ENCODE measurements at regions of chr2 and their contacts with region 1.

Region 1: DNA sequence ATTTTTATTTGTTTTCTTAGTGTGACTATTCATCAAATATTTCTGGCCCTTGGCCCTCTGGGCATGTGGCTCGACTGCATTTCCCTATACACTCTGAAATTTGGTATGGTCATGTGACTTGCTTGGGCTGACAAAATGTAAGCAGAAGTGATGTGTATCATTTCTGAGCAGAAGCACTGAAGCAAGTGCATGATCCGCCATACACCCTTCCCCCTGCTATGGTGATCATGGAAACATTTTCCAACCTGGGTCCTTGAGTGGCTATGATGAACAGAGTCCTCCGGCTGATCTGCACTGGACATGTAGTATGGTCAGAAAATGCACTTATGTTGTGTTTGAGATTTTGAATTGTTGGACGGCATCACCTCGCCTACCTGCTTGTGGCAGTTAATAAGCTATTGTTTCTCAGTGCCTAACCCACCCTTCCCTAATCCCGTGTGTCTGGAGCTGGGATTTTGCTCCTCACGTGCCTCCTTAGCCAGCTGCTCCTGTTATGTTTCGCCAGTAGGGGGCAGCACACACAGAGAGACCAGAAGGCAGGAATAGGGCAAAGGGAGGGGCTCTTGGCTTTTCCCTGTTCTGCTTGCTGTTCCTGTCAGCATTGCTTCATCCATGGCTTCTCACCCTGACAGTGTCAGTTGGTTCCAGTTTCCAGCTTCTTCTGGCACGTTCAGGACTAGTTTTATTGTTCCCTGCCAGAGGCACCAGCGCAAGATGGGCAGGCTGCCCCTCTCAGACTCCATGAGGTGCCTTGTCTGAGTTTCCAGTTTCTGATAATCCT is 207.3 kb downstream of the ARL6IP6 start:
- DNase-seq: peak; percentile 74
- ATAC-seq: peak; percentile 99
- H3K4me3 ChIP-seq: no peak overlapping the region
- H3K27ac ChIP-seq: no peak overlapping the region
- H3K4me1 ChIP-seq: no peaks in the 10 kb centered on the region
- H3K27me3 ChIP-seq: 0 out of 5 replicates have a peak, but pooled peaks cover 0 to 5% of the 10 kb centered on the region in 2 experiments
- CTCF ChIP-seq: peak; percentile 90
- EP300 ChIP-seq: no peak
- POLR2A ChIP-seq: no peak
- RAD21 ChIP-seq: peak; percentile 51; the same call in 1 of the 2 replicates

Region 2: DNA sequence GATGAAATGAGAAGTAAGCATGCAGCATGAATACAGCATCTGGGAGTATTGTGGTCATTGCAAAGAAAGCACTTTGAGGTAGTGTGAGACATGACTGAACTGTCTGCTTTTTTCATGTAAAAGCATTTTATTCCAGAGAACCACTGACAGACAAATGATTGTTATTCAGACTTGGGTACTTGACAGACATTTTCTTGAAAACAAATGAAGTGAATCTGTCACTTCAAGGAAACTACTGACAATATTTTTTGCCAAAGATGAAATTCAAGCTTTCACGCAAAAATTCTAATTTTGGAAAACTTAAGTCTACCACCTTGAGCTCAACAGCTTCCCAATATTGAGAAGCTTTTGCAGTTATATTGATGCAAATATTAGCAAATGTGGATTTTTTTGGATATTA is 48.4 kb after region 1 on chr2:
- CTCF ChIA-PET with region 1: no interaction called
- POLR2A ChIA-PET with region 1: no interaction called
- in situ Hi-C with region 1: no loop called
- intact Hi-C with region 1: no loop called
- DNase-seq: no peak
- ATAC-seq: no peak
- H3K4me3 ChIP-seq: no peak overlapping the region
- H3K27ac ChIP-seq: no peak overlapping the region
- H3K4me1 ChIP-seq: no peaks in the 10 kb centered on the region
- H3K27me3 ChIP-seq: no peaks in the 10 kb centered on the region
- CTCF ChIP-seq: no peak
- EP300 ChIP-seq: no peak
- POLR2A ChIP-seq: no peak
- RAD21 ChIP-seq: no peak

Region 3: GRCh38 chr2:153287110-153287801 is 361.5 kb after region 1 on chr2:
- CTCF ChIA-PET with region 1: no interaction called
- POLR2A ChIA-PET with region 1: no interaction called
- in situ Hi-C with region 1: no loop called
- intact Hi-C with region 1: loop called (anchors 2 kb)
- DNase-seq: peak; percentile 48
- ATAC-seq: peak; percentile 99
- H3K4me3 ChIP-seq: peak overlapping the region in 1 of 3 experiments; percentile 57; a peak in 1 of 6 replicates
- H3K27ac ChIP-seq: no peak overlapping the region
- H3K4me1 ChIP-seq: peaks cover 7% of the 10 kb centered on the region
- H3K27me3 ChIP-seq: no peaks in the 10 kb centered on the region
- CTCF ChIP-seq: peak; percentile 78
- EP300 ChIP-seq: no peak
- POLR2A ChIP-seq: no peak
- RAD21 ChIP-seq: peak; percentile 19; the same call in 1 of the 2 replicates

Region 4: DNA sequence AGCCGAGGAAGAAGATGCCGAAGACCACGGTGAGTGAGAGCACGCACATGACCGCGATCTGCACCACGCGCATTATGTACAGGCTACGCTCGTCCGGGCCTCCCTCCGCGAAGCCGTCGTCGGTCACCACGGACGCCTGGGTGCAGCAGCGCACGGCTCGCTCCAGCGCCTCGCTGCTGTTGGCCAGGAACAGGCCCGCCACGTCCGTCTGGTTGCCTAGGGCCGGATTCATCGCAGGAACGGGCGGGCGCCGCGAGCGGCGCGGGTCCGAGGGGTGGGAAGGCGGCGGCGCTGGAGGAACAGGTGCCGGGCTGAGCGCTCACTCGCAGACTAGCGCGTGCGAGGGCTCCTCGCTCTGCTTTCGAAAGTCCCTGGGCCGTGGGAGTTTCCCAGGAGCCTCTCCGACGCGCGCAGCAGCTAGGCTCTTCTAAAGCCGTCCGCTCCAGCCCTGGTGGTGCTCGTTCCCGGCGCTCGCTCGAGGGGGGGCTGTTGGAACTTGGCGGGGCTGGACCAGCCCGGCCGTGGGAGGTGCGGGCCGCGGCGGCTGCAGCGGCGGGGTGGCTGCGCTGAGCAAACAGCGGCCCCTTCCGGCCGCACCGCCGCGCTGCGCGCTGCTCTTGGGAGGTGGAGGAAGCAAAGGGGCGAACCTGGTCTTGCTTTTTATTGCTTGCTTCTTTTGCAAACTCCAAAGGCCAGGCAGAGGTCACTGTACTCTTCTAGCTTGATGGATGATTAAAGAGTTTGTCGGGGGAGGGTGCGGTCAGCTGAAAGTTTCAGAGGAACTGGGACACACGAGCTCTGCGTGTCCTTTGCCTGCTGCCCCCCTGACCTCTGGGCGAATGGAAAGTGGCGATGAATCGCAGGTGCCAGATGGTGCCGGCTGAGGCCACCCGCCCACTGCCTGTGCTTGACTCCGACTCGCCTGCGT is 552.9 kb after region 1 on chr2 and contains the start of gene RPRM:
- CTCF ChIA-PET with region 1: interaction called, 7 read pairs
- POLR2A ChIA-PET with region 1: no interaction called
- in situ Hi-C with region 1: no loop called
- intact Hi-C with region 1: loop called (anchors 1 kb)
- DNase-seq: peak; percentile 35
- ATAC-seq: peak; percentile 98
- H3K4me3 ChIP-seq: peak within 1 kb of the TSS; percentile 19 to 63 (median 39); a peak in 4 of 6 replicates
- H3K27ac ChIP-seq: no peak within 1 kb of the TSS
- H3K4me1 ChIP-seq: peaks cover 16% of the 10 kb centered on the region
- H3K27me3 ChIP-seq: peaks cover 6 to 43% of the 10 kb centered on the region in 2 experiments; a peak in 4 of 5 replicates
- CTCF ChIP-seq: peak; percentile 85
- EP300 ChIP-seq: no peak
- POLR2A ChIP-seq: no peak
- RAD21 ChIP-seq: peak; percentile 94
- total RNA-seq, gene RPRM: not detected in 2 replicates

Region 5: DNA sequence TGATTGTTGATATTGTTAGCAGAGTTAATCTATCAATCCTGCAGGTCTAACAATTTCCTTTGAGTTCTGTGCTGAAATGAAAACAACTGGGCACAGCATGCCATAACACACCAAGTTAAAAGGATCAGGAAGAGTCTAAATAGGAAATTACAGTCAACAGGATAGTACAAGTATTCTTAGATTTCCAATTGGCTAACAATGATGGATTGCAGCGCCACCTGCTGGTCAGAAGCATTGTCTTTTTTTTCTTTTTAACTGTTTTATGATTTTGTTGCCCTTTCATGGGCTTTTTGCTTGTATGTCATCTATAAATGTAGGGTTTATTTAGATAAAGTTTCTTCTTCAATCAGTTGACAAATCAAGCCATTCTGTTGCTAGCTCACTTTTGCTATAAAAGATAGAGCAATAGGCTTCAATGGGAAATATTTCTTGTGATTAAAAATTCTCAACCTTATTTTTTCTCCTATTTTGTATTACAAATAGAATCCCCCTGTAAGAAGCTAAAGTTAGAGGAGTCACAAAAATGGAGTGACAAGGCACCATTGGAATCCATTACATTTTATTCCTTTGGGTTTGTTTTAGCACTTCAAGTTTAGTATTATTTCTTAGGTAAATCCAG is 593.6 kb after region 1 on chr2:
- CTCF ChIA-PET with region 1: interaction called, 5 read pairs
- POLR2A ChIA-PET with region 1: no interaction called
- in situ Hi-C with region 1: no loop called
- intact Hi-C with region 1: loop called (anchors 1 kb)
- DNase-seq: peak; percentile 50
- ATAC-seq: peak; percentile 45; the same call in 2 of the 3 replicates
- H3K4me3 ChIP-seq: no peak overlapping the region
- H3K27ac ChIP-seq: no peak overlapping the region
- H3K4me1 ChIP-seq: no peaks in the 10 kb centered on the region
- H3K27me3 ChIP-seq: no peaks in the 10 kb centered on the region; a peak in 1 of 5 replicates
- CTCF ChIP-seq: peak; percentile 79
- EP300 ChIP-seq: no peak
- POLR2A ChIP-seq: no peak
- RAD21 ChIP-seq: no peak